Activated T-helper 1 cell treated with anti-CD3 and anti-CD28 coated beads, Interleukin-12 subunit alpha, Interleukin-12 subunit beta, Interleukin-2, Interleukin-4 antibody, amounts not matched to agents 30 ng/mL and 10 ng/mL and 1 ng/mL, durations not matched to agents 14 hours and 24 hours and 36 hours (primary cell): ENCODE measurements at regions of chr16 and their contacts with region 1.

Region 1: DNA sequence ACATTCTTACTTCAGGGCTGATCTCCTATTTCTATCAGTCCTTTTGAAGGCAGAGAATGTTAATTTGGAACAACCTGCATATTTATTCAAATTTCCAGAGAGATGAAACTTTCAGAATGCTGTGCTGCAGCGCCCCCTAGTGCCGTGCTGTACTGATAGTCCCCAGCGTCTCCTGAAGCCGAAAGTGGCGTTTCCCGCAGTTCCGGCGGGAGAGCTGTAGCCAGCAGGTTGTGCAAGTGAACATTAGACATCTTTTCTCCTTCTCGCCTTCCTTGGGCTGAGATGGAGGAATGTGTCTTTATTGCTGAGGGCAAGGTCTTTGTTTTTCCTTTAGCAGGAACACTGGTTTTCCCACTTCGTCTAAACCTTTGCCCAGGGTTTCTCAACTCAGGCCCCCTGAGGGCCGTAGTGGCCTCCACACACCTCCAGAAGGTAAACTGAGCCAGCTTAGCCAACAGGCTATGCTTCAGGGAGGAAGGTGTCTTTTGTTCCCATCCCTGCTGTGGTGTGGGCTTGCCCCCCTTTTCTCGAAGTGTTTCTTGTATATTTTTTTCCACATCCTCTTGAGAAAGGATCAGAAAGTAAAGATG is 26.4 kb downstream of the USP10 start:
- DNase-seq: peak; percentile 62
- H3K4me3 Mint-ChIP-seq: peak overlapping the region; percentile 45
- H3K27ac Mint-ChIP-seq: no peak overlapping the region
- H3K4me1 Mint-ChIP-seq: peaks cover 79% of the 10 kb centered on the region
- H3K27me3 Mint-ChIP-seq: no peaks in the 10 kb centered on the region

Region 2: DNA sequence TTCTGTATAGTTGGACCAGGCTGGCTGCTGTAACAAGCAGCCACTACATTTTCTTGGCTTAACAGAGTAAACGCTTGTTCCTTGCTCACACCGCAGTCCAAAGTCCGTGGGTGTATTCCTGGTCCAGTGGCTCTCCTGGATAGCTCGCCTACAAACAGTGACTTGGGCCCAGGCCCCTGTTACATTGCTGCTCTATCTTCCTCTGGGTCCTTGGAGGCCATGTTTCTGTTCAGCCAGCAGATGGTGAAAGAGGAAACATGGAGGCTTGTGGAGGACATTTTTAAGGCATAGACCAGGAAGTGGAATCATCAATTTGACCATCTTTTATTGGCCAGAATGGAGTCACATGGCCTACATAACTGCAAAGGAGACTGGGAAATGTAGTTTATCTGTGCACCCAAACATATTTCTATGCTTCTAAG is 302.7 kb before region 1 on chr16:
- intact Hi-C with region 1: no loop called
- DNase-seq: no peak
- H3K4me3 Mint-ChIP-seq: no peak overlapping the region
- H3K27ac Mint-ChIP-seq: no peak overlapping the region
- H3K4me1 Mint-ChIP-seq: peaks cover 7% of the 10 kb centered on the region
- H3K27me3 Mint-ChIP-seq: no peaks in the 10 kb centered on the region

Region 3: GRCh38 chr16:84511180-84511824 is 214.9 kb before region 1 on chr16:
- intact Hi-C with region 1: loop called (anchors 1 kb)
- DNase-seq: peak; percentile 73
- H3K4me3 Mint-ChIP-seq: peak overlapping the region; percentile 38
- H3K27ac Mint-ChIP-seq: peak overlapping the region; percentile 49
- H3K4me1 Mint-ChIP-seq: peaks cover 72% of the 10 kb centered on the region
- H3K27me3 Mint-ChIP-seq: no peaks in the 10 kb centered on the region

Region 4: GRCh38 chr16:84665843-84666242 is 60.3 kb before region 1 on chr16:
- intact Hi-C with region 1: no loop called
- DNase-seq: no peak
- H3K4me3 Mint-ChIP-seq: no peak overlapping the region
- H3K27ac Mint-ChIP-seq: no peak overlapping the region
- H3K4me1 Mint-ChIP-seq: no peaks in the 10 kb centered on the region
- H3K27me3 Mint-ChIP-seq: no peaks in the 10 kb centered on the region

Region 5: DNA sequence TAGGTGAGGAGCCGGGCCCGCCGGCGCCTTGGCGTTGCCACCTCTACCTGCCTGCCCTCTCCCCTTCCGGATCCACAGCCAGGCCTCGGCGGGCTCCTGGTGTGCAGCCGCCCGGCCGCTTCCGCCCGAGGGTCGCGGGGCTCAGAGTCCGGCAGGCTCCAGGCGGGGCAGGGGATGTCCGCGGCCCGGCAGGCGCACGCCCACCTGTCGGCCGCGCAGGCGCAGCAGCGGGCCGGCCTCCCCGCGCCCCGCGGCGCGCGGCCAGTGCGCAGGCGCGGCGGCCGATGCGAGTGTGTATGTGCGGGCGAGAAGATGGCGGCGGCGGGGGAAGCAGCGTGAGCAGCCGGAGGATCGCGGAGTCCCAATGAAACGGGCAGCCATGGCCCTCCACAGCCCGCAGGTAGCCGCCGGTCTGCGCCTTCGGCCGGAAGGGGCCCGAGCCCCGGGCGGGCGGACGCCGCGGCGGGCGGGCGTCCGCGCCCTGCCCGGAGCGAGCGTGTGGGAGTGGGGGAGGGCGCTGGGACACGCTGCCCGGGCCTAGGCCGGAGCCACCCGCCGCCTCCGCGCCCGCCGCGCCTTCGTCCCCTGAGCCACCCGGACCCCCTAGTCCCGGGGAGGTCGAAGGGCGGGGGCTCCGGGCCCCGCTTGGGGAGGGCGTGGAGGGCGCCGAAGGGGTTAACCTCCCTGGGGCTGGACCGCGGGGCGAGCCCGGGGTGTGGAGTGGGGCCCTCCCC is 26.3 kb before region 1 on chr16 and contains the start of gene USP10:
- intact Hi-C with region 1: loop called (anchors 1 kb)
- DNase-seq: peak; percentile 84
- H3K4me3 Mint-ChIP-seq: peak within 1 kb of the TSS; percentile 99
- H3K27ac Mint-ChIP-seq: peak within 1 kb of the TSS; percentile 96
- H3K4me1 Mint-ChIP-seq: peaks cover 38% of the 10 kb centered on the region
- H3K27me3 Mint-ChIP-seq: peaks cover 4% of the 10 kb centered on the region
- total RNA-seq, gene USP10: 153 and 159 TPM in 2 replicates